A549 (cell line): ENCODE measurements at regions of chr7 and their contacts with region 1.

Region 1: DNA sequence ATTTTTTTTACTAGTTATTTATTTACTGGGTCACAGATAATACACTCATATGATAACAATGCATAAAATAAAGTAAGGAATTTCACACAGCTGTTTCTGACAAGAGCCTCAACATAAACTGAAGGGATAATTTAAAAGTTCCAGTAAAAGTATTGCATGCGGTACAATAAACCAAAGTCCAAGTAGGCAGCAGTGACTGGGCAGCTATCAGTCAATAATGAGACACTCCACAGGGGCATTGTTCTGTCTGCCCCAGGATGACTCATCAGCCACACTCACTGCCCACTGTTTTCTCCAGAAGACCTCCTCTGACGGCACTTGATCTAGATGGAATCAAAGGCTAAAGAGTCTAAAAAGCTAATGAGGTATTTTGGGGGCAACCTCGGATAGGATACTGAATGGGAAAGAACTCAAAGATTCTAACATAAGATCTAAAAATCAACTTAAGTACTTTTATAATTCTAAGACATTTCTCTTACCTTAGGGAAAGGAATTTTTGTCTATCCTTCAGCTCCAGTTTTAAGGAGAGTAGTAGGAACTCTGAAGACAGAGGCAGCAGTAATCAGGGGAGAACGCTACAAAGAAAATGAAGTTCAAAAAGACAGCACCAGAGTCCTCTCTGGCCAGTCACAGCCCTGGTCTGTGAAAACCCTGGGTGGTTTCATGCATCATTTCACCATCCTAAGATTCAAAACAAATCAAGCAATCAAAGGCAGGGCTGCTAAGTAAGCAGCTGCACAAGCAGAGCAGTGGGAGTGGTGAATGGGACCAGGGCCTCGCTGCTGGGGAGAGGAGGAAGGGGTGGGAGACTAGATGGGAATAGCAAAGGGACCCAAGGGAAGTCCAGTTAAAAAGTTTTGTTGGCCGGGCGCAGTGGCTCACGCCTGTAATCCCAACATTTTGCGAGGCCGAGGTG is 175.1 kb downstream of the AVL9 start:
- DNase-seq: peak; percentile 47 to 94
- ATAC-seq: peak; percentile 67 to 80
- H3K4me3 ChIP-seq: peak overlapping the region; percentile 39
- H3K27ac ChIP-seq: peak overlapping the region; percentile 88 to 97
- H3K4me1 ChIP-seq: peaks cover 57% of the 10 kb centered on the region
- CTCF ChIP-seq: no peak
- EP300 ChIP-seq: peak; percentile 86 to 90; a peak in 4 of 5 replicates
- POLR2A ChIP-seq: no peak
- RAD21 ChIP-seq: peak; percentile 25 to 43; a peak in 1 of 5 replicates

Region 2: GRCh38 chr7:32495298-32496176 is 174.8 kb before region 1 on chr7 and contains the start of gene AVL9:
- CTCF ChIA-PET with region 1: no interaction called
- POLR2A ChIA-PET with region 1: interaction called, 14 read pairs
- DNase-seq: peak; percentile 82 to 96
- ATAC-seq: peak; percentile 97
- H3K4me3 ChIP-seq: peak within 1 kb of the TSS; percentile 88
- H3K27ac ChIP-seq: peak within 1 kb of the TSS; percentile 99 to 100
- H3K4me1 ChIP-seq: peaks cover 23% of the 10 kb centered on the region
- CTCF ChIP-seq: no peak
- EP300 ChIP-seq: 0 out of 5 replicates have a peak, but pooled peaks of 1 of the 2 experiments have one; percentile 20
- POLR2A ChIP-seq: peak; percentile 62
- RAD21 ChIP-seq: no peak
- polyA plus RNA-seq, gene AVL9: 36.1 and 69.3 TPM in 2 replicates

Region 3: GRCh38 chr7:32588657-32589056 is 81.7 kb before region 1 on chr7:
- CTCF ChIA-PET with region 1: interaction called, 10 read pairs
- POLR2A ChIA-PET with region 1: no interaction called
- DNase-seq: peak in 1 of 2 experiments; percentile 35
- ATAC-seq: no peak
- H3K4me3 ChIP-seq: no peak overlapping the region
- H3K27ac ChIP-seq: peak overlapping the region; percentile 96 to 98
- H3K4me1 ChIP-seq: peaks cover 56% of the 10 kb centered on the region
- CTCF ChIP-seq: no peak
- EP300 ChIP-seq: no peak
- POLR2A ChIP-seq: no peak
- RAD21 ChIP-seq: no peak